Astrocyte of the cerebellum (primary cell): ENCODE measurements at regions of chr4 and their contacts with region 1.

Region 1: GRCh38 chr4:37540486-37540885 is 145.7 kb downstream of the RELL1 start:
- DNase-seq: peak; percentile 35
- H3K4me3 ChIP-seq: no peak overlapping the region
- CTCF ChIP-seq: no peak

Region 2: DNA sequence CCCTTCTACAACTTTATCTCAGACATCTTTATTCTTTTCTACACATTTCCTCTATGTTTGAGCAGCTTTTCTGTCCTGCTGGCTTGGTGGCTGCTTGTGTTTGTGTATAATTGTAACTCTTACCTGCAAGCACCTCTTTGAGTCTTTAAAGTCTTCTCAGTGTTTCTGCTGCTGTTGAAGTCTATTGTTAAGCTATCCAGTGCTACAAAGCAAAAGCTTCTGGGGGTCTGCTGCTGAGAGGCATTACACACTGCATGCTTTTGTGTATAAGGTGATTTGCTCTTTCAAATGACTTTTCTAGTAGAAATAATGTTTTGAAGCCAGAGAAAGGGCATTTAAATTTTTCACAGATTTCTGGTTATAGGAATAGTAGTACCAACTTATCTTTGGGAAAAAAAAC is 1017.3 kb before region 1 on chr4:
- in situ Hi-C with region 1: no loop called
- DNase-seq: no peak
- H3K4me3 ChIP-seq: no peak overlapping the region
- CTCF ChIP-seq: no peak

Region 3: DNA sequence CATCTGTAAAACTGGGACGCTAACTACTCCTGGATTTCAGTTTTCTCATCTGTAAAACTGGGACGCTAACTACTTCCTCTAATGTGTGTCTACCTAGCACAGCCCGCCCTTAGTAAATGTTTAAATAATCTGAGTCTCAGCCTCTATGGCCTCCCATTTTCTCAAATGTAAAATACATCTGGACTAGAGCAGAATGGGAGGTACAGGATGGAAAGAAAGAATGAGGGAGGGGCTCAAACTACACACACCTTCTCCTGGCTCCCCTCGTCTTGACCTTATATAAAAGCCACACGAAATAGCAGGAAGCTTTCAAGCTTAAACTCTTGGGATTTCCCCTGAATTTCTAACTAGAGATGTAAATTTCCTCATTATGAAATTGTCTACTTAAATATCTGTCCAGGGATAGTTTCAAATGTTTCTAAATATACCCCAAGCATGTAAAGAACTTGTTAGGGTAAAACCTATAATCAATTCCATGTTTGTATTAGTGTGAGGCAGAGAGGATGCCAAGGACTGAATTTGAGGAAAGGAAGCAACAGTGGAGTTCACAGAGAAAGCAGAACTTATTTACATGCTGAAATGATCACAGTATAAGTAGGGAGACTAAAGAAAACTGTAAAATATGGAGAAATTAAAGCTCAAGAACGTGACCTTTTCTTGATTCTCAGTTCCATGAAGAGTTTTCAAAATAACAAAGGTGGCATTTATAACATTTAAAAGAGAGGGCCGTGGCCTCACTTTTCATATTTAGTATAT is 75.9 kb before region 1 on chr4:
- in situ Hi-C with region 1: loop called (anchors 5 kb)
- DNase-seq: no peak
- H3K4me3 ChIP-seq: no peak overlapping the region
- CTCF ChIP-seq: no peak